PC-9 (cell line): ENCODE measurements at regions of chr12 and their contacts with region 1.

Region 1: DNA sequence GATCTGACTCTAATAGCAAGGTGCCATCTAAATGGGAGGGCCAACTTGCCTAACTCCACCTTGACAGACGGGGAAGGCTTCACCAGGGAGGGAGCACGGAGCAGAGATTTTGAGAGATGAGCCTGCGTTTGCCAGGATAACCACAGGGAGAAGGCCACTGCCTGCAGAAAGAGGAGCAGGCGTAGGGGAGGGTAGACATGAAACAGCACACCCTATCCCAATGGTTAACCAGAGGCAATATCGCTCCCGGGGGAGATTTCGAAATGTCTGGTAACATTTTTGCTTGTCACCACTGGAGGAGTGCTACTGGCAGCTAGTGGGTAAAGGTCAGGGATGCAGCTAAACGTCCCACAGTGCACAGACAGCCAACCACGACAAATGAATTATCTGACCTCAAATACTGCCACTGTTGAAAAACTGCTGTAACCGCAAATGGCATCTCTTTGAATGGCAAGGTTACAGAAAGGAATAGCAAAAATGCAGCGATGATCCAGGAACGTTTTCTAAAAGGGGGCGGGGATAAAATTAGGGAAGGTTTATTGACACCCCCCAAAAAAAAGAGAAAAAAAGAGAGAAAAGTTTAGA is 126.0 kb upstream of the ATF7IP start:
- DNase-seq: peak; percentile 84 to 93
- H3K4me3 ChIP-seq: peak overlapping the region; percentile 51
- H3K27ac ChIP-seq: peak overlapping the region; percentile 94
- H3K4me1 ChIP-seq: peaks cover 28% of the 10 kb centered on the region
- H3K27me3 ChIP-seq: no peaks in the 10 kb centered on the region
- CTCF ChIP-seq: no peak

Region 2: GRCh38 chr12:12946686-12947355 is 1292.6 kb before region 1 on chr12:
- CTCF ChIA-PET with region 1: no interaction called
- POLR2A ChIA-PET with region 1: no interaction called
- intact Hi-C with region 1: no loop called
- DNase-seq: no peak
- H3K4me3 ChIP-seq: no peak overlapping the region
- H3K27ac ChIP-seq: no peak overlapping the region
- H3K4me1 ChIP-seq: no peaks in the 10 kb centered on the region
- H3K27me3 ChIP-seq: no peaks in the 10 kb centered on the region
- CTCF ChIP-seq: no peak

Region 3: GRCh38 chr12:14257734-14258574 is 18.5 kb after region 1 on chr12:
- CTCF ChIA-PET with region 1: interaction called, 3 read pairs
- POLR2A ChIA-PET with region 1: no interaction called
- intact Hi-C with region 1: loop called (anchors 1 kb)
- DNase-seq: peak; percentile 86 to 95
- H3K4me3 ChIP-seq: no peak overlapping the region
- H3K27ac ChIP-seq: peak overlapping the region; percentile 93
- H3K4me1 ChIP-seq: peaks cover 40% of the 10 kb centered on the region
- H3K27me3 ChIP-seq: no peaks in the 10 kb centered on the region
- CTCF ChIP-seq: no peak

Region 4: DNA sequence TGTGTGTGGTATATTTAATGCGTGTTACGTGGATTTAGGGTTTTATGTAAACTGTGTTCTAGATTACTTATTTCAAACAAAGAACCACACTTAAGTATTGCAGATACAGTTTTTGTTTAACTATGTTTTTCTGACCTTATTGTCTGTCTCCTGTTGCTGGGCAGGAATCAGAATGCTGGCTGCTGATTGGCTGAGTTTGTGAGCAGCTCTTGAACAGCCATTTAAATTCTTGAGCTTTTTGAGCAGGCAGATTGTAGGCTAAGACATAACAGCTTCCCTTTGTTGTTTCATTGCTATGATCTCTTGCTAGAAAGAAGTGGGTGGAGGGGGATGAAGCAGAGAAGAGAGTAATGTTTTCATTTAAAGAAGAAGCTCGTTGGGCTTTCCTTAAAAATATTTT is 178.3 kb after region 1 on chr12:
- CTCF ChIA-PET with region 1: interaction called, 4 read pairs
- POLR2A ChIA-PET with region 1: no interaction called
- intact Hi-C with region 1: loop called (anchors 1 kb)
- DNase-seq: peak in 1 of 2 experiments; percentile 61
- H3K4me3 ChIP-seq: no peak overlapping the region
- H3K27ac ChIP-seq: no peak overlapping the region
- H3K4me1 ChIP-seq: no peaks in the 10 kb centered on the region; the same call in 1 of the 2 replicates
- H3K27me3 ChIP-seq: no peaks in the 10 kb centered on the region
- CTCF ChIP-seq: no peak

Region 5: DNA sequence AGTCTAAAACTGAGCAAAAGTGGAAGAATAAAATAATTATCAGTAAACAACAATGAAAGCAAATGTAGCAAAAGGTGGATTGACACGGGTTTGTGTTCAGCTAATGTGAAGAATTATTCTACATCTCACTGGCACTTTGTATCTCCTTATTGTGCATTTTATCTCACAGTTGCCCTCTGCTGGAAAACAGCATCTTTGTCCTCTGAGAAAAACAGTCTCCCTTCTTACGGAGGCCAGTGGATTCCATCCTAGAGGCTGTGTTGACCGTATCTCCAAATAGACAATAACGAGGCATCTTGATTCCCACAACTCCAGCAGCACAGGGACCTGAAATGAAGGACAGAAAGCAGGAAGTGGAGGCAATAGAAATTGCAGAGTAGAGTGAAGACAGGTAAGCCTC is 379.5 kb after region 1 on chr12:
- CTCF ChIA-PET with region 1: interaction called, 8 read pairs
- POLR2A ChIA-PET with region 1: no interaction called
- intact Hi-C with region 1: loop called (anchors 2 kb)
- DNase-seq: no peak
- H3K4me3 ChIP-seq: no peak overlapping the region
- H3K27ac ChIP-seq: no peak overlapping the region
- H3K4me1 ChIP-seq: no peaks in the 10 kb centered on the region
- H3K27me3 ChIP-seq: no peaks in the 10 kb centered on the region
- CTCF ChIP-seq: peak; percentile 56; the same call in 1 of the 2 replicates

Region 6: DNA sequence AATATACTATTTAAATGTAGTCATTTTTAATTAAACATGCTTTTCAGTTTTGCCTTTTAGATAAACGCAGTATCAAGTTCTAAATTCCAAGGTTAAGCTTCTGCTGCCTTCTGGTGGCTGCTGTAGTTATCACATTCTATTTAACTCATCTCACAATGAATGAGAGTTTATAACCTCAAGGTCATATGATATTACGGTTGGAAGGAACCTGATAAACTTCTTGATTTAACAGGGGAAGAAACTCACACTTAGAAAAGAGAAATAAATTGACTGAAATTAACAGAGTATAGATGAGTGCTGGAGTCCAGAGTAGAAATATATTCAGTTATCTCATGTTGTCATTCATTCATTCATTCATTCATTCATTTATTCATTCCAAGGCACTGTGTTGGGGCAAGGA is 425.1 kb after region 1 on chr12:
- CTCF ChIA-PET with region 1: no interaction called
- POLR2A ChIA-PET with region 1: no interaction called
- intact Hi-C with region 1: loop called (anchors 1 kb)
- DNase-seq: peak; percentile 37 to 45
- H3K4me3 ChIP-seq: no peak overlapping the region
- H3K27ac ChIP-seq: no peak overlapping the region
- H3K4me1 ChIP-seq: no peaks in the 10 kb centered on the region
- H3K27me3 ChIP-seq: no peaks in the 10 kb centered on the region
- CTCF ChIP-seq: peak; percentile 79